Breast epithelium (tissue), 4 donors: ENCODE measurements at regions of chr13 and their contacts with region 1.

Region 1: GRCh38 chr13:48571126-48571913 is 38.4 kb upstream of the RCBTB2 start:
- DNase-seq: no peak
- H3K4me3 ChIP-seq: peak overlapping the region; percentile 15 to 40 (median 36)
- H3K27ac ChIP-seq: peak overlapping the region; percentile 64 to 82
- H3K4me1 ChIP-seq: peaks cover 0 to 2% of the 10 kb centered on the region in 2 donors
- H3K27me3 ChIP-seq: no peaks in the 10 kb centered on the region
- CTCF ChIP-seq: no peak
- POLR2A ChIP-seq: no peak

Region 2: DNA sequence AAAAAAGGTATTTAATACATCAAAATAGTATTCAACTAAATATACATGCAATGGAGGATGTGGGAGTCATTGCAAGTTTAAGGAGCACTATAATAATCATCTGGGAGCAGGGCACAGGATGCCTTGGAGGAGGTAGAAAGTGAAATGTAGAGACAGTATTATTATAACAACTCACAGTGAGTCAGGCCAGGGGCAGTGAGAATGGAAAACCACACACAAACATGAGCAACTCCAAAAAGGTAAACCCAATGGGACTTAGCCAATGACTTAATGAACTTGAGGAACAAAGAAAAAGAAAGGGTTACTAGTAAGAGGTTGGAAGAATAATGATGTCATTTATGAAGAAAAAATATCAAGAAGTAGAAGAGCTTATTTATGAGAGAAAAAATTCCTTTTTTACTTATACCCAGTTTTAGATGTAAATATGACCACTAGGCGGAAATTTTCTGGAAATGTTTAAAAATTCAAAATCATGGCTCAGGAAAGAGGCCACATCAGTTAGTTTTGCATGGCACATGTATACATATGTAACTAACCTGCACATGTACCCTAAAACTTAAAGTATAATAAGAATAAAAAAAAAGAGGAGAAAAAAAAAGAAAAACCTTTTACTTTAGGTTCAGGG is 959.5 kb before region 1 on chr13:
- intact Hi-C with region 1: no loop called
- DNase-seq: no peak
- H3K4me3 ChIP-seq: no peak overlapping the region
- H3K27ac ChIP-seq: no peak overlapping the region
- H3K4me1 ChIP-seq: no peaks in the 10 kb centered on the region
- H3K27me3 ChIP-seq: no peaks in the 10 kb centered on the region
- CTCF ChIP-seq: no peak
- POLR2A ChIP-seq: no peak

Region 3: DNA sequence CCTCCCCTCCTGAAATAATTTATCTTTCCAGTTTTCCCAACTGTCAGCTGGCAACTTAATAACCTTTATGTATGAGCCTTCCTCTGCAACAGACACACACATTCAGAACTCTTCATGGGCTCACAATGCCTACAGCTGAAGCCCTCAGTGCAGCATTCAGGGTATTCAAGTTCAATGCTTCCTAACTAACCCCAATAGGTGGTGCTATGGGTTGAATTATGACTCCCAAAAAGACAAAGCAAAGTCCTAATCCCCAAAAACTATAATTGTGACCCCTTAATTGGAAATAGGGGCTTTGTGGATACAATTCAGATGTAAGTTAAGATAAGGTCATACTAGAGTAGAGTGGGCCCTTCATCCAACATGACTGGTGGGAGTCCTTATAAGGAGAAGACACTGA is 772.4 kb before region 1 on chr13:
- intact Hi-C with region 1: no loop called
- DNase-seq: no peak
- H3K4me3 ChIP-seq: no peak overlapping the region
- H3K27ac ChIP-seq: no peak overlapping the region
- H3K4me1 ChIP-seq: no peaks in the 10 kb centered on the region
- H3K27me3 ChIP-seq: no peaks in the 10 kb centered on the region
- CTCF ChIP-seq: no peak
- POLR2A ChIP-seq: no peak

Region 4: GRCh38 chr13:48094781-48095502 is 476.4 kb before region 1 on chr13 and contains the start of gene MED4:
- intact Hi-C with region 1: loop called (anchors 5 kb)
- DNase-seq: peak; percentile 92 to 94
- H3K4me3 ChIP-seq: peak within 1 kb of the TSS; percentile 76 to 99 (median 90)
- H3K27ac ChIP-seq: peak within 1 kb of the TSS; percentile 88 to 89
- H3K4me1 ChIP-seq: peaks cover 0 to under 1% of the 10 kb centered on the region in 2 donors
- H3K27me3 ChIP-seq: no peaks in the 10 kb centered on the region
- CTCF ChIP-seq: peak; percentile 98 to 99 (median 99)
- POLR2A ChIP-seq: peak; percentile 82
- total RNA-seq, gene MED4: 39.0 to 45.1 (median 39.8) TPM